Posterior vena cava (tissue), 2 donors: ENCODE measurements at regions of chr6 and their contacts with region 1.

Region 1: GRCh38 chr6:126477678-126478077 is 137.8 kb downstream of the CENPW start:
- DNase-seq: no peak

Region 2: DNA sequence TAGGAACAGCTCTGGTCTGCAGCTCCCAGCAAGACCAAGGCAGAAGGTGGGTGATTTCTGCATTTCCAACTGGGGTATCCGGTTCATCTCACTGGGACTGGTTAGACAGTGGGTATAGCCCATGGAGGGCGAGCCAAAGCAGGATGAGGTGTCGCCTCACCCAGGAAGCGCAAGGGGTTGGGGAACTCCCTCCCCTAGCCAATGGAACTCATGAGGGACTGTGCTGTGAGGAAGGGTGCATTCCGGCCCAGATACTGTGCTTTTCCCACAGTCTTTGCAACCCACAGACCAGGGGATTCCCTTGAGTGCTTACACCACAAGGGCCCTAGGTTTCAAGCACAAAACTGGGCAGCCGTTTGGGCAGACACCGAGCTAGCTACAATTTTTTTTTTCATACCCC is 1197.7 kb before region 1 on chr6:
- intact Hi-C with region 1: no loop called
- DNase-seq: no peak

Region 3: GRCh38 chr6:126529637-126530362 is 52.1 kb after region 1 on chr6:
- intact Hi-C with region 1: loop called in 1 of 2 experiments (anchors 2 kb)
- DNase-seq: no peak